ENCODE measurements at regions of chr2 and their contacts with region 1.

Region 1: DNA sequence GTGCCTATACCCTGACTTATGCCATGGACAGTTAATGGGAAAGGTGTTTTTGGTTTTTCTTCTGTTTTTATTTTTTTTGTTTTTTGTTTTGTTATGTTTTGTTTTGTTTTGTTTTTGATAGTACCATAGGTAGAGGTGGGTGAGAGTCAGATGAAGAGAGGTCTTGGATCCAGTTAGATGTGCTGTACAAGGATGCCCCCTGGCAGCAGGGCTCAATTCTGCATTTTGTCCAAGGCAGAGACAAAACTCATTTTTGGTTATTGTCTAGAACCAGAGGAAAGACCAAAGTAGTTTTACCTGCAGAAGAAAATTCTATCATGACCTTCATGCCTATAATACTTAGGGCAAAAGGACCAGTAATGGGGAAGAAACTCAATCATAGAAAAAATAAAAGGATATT is 48.5 kb downstream of the SLC5A7 start:
- DNase-seq: peak; percentile 31
- ATAC-seq: no peak
- H3K4me3 ChIP-seq: no peak overlapping the region
- H3K27ac ChIP-seq: no peak overlapping the region
- H3K4me1 ChIP-seq: no peaks in the 10 kb centered on the region
- H3K27me3 ChIP-seq: peaks cover 9% of the 10 kb centered on the region
- CTCF ChIP-seq: peak; percentile 80

Region 2: DNA sequence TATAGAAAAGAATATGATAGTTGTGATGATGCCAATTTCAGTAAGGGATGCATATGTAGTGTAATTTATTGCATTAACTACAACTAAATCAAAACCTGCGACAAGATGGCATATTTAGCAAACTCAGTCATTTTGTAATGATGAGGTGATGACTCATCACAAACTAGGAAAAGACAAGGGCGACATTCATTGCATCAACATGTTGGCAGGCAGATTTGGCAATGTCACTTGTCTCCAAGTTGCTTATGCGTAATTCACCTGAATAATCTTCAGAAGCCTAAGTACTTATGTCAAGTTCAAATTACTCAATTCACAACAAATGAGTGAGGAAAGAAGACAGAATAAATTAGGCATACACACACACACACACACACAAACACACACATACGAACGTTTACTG is 481.3 kb before region 1 on chr2:
- CTCF ChIA-PET with region 1: no interaction called
- POLR2A ChIA-PET with region 1: no interaction called
- intact Hi-C with region 1: no loop called
- DNase-seq: peak; percentile 75
- ATAC-seq: no peak
- H3K4me3 ChIP-seq: no peak overlapping the region
- H3K27ac ChIP-seq: no peak overlapping the region
- H3K4me1 ChIP-seq: no peaks in the 10 kb centered on the region
- H3K27me3 ChIP-seq: no peaks in the 10 kb centered on the region
- CTCF ChIP-seq: no peak

Region 3: DNA sequence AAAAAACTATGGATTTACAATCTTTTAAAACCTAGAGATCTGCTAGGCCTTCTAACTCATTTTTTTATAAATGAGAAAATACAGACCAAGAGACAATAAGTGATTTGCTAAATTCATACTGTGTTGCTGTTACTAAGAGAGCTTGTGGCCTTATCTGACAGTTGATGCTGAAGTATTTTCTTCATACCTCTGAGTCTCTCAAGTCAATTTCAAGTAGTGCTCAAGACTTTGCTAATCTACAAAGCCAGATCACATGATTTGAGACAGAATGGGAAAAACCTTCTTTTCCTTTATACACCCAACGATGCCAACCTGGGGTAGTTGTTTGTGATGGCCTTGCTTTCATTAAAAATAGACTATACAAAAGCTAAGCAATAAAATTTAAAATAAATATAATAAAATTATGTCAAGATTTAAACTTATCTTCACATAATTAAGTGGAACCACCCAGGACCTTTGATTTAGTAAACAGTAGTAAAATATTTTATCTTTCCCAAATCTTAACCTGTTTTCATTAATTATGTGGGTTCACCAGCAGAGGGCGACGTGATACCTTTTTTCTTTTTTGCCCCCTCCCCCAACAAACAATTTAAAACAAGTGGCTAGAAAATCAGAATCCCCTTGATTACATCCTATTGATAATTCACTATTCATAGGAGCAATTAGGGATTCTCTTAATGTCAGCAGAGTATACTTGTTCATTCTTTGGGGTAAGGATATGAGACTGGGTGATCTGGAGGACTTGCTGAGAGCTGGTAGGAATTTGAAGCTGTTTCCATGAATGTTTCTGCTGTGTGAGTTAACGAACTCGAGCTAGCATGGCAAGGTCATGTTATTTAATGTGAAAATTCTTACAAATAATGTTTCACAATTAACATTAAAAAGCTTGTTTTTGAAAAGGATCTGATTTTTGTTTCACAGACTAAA is 98.2 kb before region 1 on chr2:
- CTCF ChIA-PET with region 1: interaction called, 8 read pairs
- POLR2A ChIA-PET with region 1: no interaction called
- intact Hi-C with region 1: loop called (anchors 1 kb)
- DNase-seq: peak; percentile 44
- ATAC-seq: no peak
- H3K4me3 ChIP-seq: no peak overlapping the region
- H3K27ac ChIP-seq: no peak overlapping the region
- H3K4me1 ChIP-seq: no peaks in the 10 kb centered on the region
- H3K27me3 ChIP-seq: peaks cover 28% of the 10 kb centered on the region
- CTCF ChIP-seq: peak; percentile 80

Region 4: GRCh38 chr2:107992069-107992468 is 42.8 kb before region 1 on chr2:
- CTCF ChIA-PET with region 1: no interaction called
- POLR2A ChIA-PET with region 1: no interaction called
- intact Hi-C with region 1: loop called (anchors 5 kb)
- DNase-seq: peak; percentile 86
- ATAC-seq: peak; percentile 96
- H3K4me3 ChIP-seq: peak overlapping the region; percentile 39; the same call in 1 of the 2 replicates
- H3K27ac ChIP-seq: peak overlapping the region; percentile 83
- H3K4me1 ChIP-seq: peaks cover 34% of the 10 kb centered on the region
- H3K27me3 ChIP-seq: no peaks in the 10 kb centered on the region
- CTCF ChIP-seq: no peak

Region 5: DNA sequence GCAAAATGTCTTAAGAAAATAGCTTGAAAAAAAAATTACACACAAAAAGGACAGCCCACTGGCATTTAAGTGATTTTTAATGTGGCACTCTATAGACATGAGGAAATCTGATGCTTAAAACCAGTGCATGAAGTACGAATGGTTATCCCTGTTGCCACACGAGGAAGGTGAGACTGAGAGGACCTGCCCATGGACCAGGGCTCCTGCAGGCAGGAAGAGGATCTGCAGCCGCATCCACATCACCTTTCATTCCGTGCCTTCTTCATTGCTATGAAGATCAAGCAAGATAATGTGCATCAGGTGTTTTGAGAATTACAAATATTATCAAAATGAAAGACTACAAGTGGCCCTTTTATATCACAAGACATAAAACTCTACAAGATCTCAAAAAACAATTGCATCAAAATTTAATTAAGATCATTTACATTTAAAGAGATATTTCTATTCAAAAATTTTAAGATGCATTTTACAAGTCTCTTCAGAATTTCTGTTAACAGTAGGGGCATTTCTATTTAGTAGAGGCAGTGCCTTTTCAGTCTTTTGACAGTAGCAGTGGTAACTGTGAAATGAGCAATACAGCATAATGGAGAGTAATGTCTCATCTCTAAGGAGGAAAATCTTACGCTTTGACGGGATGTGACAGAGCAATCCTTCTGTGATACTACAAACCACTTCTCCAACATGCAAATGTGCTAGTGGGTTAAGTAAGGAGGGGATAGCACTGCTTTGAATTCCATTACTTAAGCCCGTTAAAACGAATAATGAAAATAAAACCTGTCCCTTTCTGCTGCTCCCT is 34.9 kb after region 1 on chr2:
- CTCF ChIA-PET with region 1: no interaction called
- POLR2A ChIA-PET with region 1: no interaction called
- intact Hi-C with region 1: no loop called
- DNase-seq: peak; percentile 29
- ATAC-seq: peak; percentile 53; the same call in 1 of the 2 replicates
- H3K4me3 ChIP-seq: no peak overlapping the region
- H3K27ac ChIP-seq: no peak overlapping the region
- H3K4me1 ChIP-seq: no peaks in the 10 kb centered on the region
- H3K27me3 ChIP-seq: peaks cover 90% of the 10 kb centered on the region
- CTCF ChIP-seq: peak; percentile 44

Region 6: GRCh38 chr2:108139521-108139920 is 104.7 kb after region 1 on chr2:
- CTCF ChIA-PET with region 1: no interaction called
- POLR2A ChIA-PET with region 1: no interaction called
- intact Hi-C with region 1: no loop called
- DNase-seq: peak; percentile 53
- ATAC-seq: no peak
- H3K4me3 ChIP-seq: no peak overlapping the region
- H3K27ac ChIP-seq: no peak overlapping the region
- H3K4me1 ChIP-seq: no peaks in the 10 kb centered on the region
- H3K27me3 ChIP-seq: peaks cover under 1% of the 10 kb centered on the region; the same call in 1 of the 2 replicates
- CTCF ChIP-seq: no peak

Measured in PC-3 (cell line).